AG04450 (cell line): ENCODE measurements at regions of chrX and their contacts with region 1.

Region 1: DNA sequence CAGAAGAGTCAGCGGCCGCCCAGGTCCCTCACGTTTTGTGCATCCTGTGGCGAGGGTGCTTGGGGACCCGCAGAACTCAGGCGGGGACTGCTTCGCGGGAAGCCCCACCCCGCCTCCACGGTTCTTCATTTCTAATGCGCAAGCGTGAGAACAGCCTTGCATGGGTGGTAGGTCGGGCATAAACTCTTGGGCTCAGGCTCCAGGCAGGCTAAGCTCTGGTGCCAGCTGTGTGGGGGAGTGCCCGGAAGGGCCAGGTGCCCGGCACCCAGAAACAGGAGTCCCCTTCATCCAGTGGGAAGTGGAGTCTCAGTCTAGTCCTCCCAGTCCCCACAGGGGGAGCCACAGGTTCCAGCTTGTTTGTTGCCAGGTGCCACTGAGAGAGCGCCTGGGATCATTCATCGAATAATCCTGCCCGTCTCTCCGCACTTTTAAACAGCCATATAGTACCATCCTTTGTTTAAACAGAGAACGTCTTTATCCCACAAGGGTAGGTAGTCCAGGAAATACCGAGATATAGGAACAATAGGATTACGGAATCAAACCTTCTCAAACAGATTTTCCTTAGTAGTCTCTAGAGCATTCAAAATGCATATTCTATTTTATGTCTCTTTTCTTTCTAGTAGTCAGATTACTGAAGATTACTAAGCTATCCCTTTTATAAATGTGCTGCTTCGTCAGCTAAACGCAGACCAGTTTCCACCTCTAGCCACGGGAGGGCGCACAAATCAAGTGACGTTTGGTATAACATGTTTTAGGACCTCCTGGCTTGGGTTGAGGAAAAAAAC is 12.7 kb upstream of the RBBP7 start:
- DNase-seq: no peak
- H3K4me3 ChIP-seq: peak overlapping the region; percentile 61
- H3K27ac ChIP-seq: no peak overlapping the region
- H3K27me3 ChIP-seq: no peaks in the 10 kb centered on the region
- CTCF ChIP-seq: peak; percentile 64

Region 2: GRCh38 chrX:16867947-16868346 is 14.9 kb before region 1 on chrX:
- CTCF ChIA-PET with region 1: interaction called, 28 read pairs
- POLR2A ChIA-PET with region 1: interaction called, 6 read pairs
- DNase-seq: no peak
- H3K4me3 ChIP-seq: peak overlapping the region; percentile 73
- H3K27ac ChIP-seq: no peak overlapping the region
- H3K27me3 ChIP-seq: no peaks in the 10 kb centered on the region
- CTCF ChIP-seq: no peak